AG04450 (cell line): ENCODE measurements at regions of chr11 and their contacts with region 1.

Region 1: DNA sequence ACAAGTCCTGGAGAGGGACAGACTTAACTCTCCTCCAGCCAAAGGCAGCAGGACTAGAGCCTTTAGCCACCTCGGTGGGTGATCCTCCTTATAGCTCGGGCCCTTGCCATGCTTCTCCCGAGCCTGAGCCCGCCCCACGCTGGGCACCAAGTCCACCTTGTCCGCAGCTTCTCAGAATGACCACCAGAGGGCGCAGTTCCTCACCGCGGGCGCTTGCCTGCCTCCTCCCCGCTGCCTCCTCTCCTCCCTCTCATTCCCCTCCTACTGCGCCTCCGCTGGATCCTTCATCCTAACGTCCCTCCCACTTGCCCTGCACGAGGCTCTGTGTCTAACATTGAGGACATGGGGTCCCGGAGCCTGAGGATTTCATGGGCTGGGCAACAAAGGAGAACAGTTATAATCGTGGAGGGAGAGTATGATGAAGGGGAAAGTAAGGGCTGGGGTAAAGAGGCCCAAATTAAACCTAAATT is 11.3 kb upstream of the MOGAT2 start:
- DNase-seq: peak; percentile 13
- H3K4me3 ChIP-seq: no peak overlapping the region
- H3K27ac ChIP-seq: no peak overlapping the region
- H3K27me3 ChIP-seq: no peaks in the 10 kb centered on the region
- CTCF ChIP-seq: peak; percentile 86

Region 2: GRCh38 chr11:75689863-75690609 is 16.3 kb before region 1 on chr11:
- CTCF ChIA-PET with region 1: interaction called, 16 read pairs
- POLR2A ChIA-PET with region 1: no interaction called
- DNase-seq: no peak
- H3K4me3 ChIP-seq: no peak overlapping the region
- H3K27ac ChIP-seq: no peak overlapping the region
- H3K27me3 ChIP-seq: peaks cover 22% of the 10 kb centered on the region
- CTCF ChIP-seq: no peak

Region 3: GRCh38 chr11:75718419-75719339 is 12.4 kb after region 1 on chr11:
- CTCF ChIA-PET with region 1: interaction called, 14 read pairs
- POLR2A ChIA-PET with region 1: no interaction called
- DNase-seq: no peak
- H3K4me3 ChIP-seq: no peak overlapping the region
- H3K27ac ChIP-seq: no peak overlapping the region
- H3K27me3 ChIP-seq: peaks cover 27% of the 10 kb centered on the region
- CTCF ChIP-seq: no peak